ENCODE measurements at regions of chr7 and their contacts with region 1.

Region 1: DNA sequence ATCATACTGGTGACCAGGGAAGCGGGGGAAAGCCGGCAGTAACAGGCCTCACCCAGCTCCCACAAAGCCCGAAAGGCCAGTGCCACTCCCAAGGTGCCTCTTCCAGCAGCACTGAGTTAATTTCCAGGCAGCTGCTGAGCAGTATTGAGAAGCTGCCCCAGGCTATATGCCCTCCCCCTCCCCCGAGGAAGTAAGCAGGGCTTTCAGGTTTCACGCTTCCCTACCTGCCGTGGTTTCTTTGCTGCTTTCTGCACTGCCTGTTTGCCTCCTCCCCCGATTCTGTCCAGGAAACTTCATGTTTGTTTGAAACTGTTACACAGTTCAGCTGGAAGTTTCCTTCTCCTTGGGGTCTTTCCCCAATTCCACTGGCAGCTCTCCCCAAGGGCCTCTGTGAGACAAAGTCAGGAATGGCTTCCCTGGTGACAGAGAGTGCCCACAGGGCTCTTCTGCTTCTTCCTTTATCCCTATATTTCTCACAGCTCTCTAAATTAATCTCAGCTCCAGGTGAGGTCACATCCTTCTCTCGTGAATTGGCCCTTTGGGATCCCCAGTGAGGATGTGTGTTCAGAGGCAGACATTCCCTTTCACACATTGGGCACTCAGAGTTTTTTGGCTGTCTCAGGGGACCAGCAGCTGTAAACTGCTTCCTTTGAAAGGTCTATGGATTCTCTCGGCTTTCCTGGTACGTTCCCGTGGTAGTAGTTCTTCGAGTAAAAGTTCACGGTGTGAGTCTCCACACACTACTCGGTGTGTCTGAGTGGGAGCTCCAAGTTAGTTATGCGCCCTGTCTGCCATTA is 19.4 kb downstream of the C1GALT1 start:
- DNase-seq: peak in 1 of 5 donors; percentile 36
- ATAC-seq: peak in 3 of 4 donors; percentile 38 to 56 (median 55)
- H3K4me3 ChIP-seq: no peak overlapping the region
- H3K27ac ChIP-seq: peak overlapping the region in 4 of 12 donors; percentile 9 to 35 (median 22)
- H3K4me1 ChIP-seq: peaks cover 0 to 40% (median 6%) of the 10 kb centered on the region in 12 donors
- H3K27me3 ChIP-seq: no peaks in the 10 kb centered on the region
- CTCF ChIP-seq: no peak
- POLR2A ChIP-seq: no peak

Region 2: GRCh38 chr7:7032210-7032609 is 169.6 kb before region 1 on chr7:
- intact Hi-C with region 1: no loop called
- DNase-seq: no peak
- ATAC-seq: peak in 1 of 4 donors; percentile 16
- H3K4me3 ChIP-seq: no peak overlapping the region
- H3K27ac ChIP-seq: no peak overlapping the region
- H3K4me1 ChIP-seq: no peaks in the 10 kb centered on the region
- H3K27me3 ChIP-seq: no peaks in the 10 kb centered on the region
- CTCF ChIP-seq: no peak
- POLR2A ChIP-seq: no peak

Region 3: DNA sequence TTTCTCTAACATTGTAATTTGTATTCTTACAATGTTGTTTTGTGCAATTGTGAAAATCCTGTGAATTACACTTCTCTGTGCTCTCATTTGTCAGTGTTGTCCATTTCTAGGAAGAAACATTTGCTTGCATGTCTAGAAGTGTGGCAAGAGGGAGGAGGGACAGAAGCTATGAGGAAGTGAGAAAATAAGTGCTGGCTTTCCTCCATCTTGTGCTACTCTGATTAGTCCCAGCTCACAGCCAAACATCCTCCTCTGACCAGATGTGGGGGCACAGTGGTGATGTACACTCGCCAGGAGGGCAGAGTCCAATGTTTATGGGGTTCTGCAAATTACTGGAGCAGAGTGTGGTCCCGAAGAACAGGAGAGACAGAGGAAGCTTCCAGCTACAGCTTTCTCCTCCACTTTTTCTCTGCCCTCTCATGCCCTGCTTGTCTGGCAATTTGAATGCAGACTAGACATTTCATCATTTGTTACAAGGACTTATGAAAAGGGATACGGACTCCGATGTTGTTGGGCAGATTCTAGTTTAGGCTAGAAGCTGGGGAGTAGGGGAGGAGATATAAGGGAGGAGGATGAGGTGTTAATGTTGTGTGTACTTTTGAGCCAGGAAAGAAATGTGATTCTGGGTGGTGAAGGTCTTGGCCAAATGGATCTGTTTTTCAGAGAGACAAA is 150.4 kb before region 1 on chr7:
- intact Hi-C with region 1: no loop called
- DNase-seq: peak in 1 of 5 donors; percentile 22
- ATAC-seq: peak in 2 of 4 donors; percentile 78 to 80
- H3K4me3 ChIP-seq: no peak overlapping the region
- H3K27ac ChIP-seq: no peak overlapping the region
- H3K4me1 ChIP-seq: peaks cover 0 to 8% (median 0%) of the 10 kb centered on the region in 12 donors
- H3K27me3 ChIP-seq: no peaks in the 10 kb centered on the region
- CTCF ChIP-seq: no peak
- POLR2A ChIP-seq: no peak

Region 4: GRCh38 chr7:7263312-7264230 is 61.8 kb after region 1 on chr7:
- intact Hi-C with region 1: loop called in 1 of 10 experiments (anchors 2 kb)
- DNase-seq: no peak
- ATAC-seq: no peak
- H3K4me3 ChIP-seq: no peak overlapping the region
- H3K27ac ChIP-seq: no peak overlapping the region
- H3K4me1 ChIP-seq: peaks cover 0 to 24% (median 0%) of the 10 kb centered on the region in 12 donors
- H3K27me3 ChIP-seq: no peaks in the 10 kb centered on the region
- CTCF ChIP-seq: no peak
- POLR2A ChIP-seq: no peak

Measured in heart left ventricle (tissue), 16 donors.